ENCODE measurements at regions of chr20 and their contacts with region 1.

Region 1: GRCh38 chr20:324177-325044 is 941 bp upstream of the SOX12 start:
- DNase-seq: peak; percentile 88
- H3K4me3 Mint-ChIP-seq: peak overlapping the region; percentile 86
- H3K27ac Mint-ChIP-seq: peak overlapping the region; percentile 84
- H3K4me1 Mint-ChIP-seq: peaks cover 14% of the 10 kb centered on the region
- H3K27me3 Mint-ChIP-seq: no peaks in the 10 kb centered on the region

Region 2: GRCh38 chr20:242905-243304 is 81.5 kb before region 1 on chr20:
- intact Hi-C with region 1: no loop called
- DNase-seq: no peak
- H3K4me3 Mint-ChIP-seq: no peak overlapping the region
- H3K27ac Mint-ChIP-seq: no peak overlapping the region
- H3K4me1 Mint-ChIP-seq: peaks cover 9% of the 10 kb centered on the region
- H3K27me3 Mint-ChIP-seq: peaks cover 21% of the 10 kb centered on the region

Region 3: DNA sequence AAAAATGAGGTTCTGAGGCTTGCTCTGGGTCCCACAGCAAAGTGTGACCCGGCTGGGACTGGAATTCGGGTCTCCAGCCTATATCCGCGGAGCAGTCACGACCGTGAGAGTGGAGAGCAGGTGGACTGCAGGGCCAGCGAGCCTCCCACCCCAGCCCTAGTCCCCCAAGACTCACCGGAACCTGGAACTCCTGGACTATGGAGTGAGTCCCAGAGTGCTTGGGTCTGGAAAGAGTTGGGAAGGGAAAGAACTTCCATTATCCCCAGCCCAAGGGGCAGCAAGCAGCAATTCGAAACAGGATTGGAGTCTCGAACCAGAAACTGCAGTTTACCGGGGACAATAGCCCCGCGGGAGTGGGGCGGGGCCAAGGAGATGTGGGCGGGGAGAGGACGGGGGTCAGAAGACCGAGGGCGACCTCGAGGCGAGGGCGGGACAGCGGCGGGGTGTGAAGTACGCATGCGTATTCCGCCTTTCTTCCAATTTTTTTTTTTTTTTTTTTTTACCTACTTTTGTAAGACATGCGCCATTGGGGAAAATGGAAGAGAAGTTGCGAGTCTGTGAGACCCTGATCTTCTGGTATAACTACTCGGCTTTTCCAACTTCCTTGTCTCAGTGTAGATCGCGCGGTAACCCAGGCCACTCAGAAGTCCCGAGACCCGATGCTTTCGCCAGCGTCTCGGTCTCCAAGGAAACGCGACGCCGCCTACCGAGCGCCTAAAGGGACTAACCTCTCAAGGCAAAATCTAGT is 34.2 kb before region 1 on chr20 and contains the start of gene C20orf96:
- intact Hi-C with region 1: loop called (anchors 1 kb)
- DNase-seq: peak; percentile 84
- H3K4me3 Mint-ChIP-seq: no peak within 1 kb of the TSS
- H3K27ac Mint-ChIP-seq: peak within 1 kb of the TSS; percentile 87
- H3K4me1 Mint-ChIP-seq: peaks cover 21% of the 10 kb centered on the region
- H3K27me3 Mint-ChIP-seq: no peaks in the 10 kb centered on the region
- total RNA-seq, gene C20orf96: 7.6 and 9.5 TPM in 2 replicates

Region 4: DNA sequence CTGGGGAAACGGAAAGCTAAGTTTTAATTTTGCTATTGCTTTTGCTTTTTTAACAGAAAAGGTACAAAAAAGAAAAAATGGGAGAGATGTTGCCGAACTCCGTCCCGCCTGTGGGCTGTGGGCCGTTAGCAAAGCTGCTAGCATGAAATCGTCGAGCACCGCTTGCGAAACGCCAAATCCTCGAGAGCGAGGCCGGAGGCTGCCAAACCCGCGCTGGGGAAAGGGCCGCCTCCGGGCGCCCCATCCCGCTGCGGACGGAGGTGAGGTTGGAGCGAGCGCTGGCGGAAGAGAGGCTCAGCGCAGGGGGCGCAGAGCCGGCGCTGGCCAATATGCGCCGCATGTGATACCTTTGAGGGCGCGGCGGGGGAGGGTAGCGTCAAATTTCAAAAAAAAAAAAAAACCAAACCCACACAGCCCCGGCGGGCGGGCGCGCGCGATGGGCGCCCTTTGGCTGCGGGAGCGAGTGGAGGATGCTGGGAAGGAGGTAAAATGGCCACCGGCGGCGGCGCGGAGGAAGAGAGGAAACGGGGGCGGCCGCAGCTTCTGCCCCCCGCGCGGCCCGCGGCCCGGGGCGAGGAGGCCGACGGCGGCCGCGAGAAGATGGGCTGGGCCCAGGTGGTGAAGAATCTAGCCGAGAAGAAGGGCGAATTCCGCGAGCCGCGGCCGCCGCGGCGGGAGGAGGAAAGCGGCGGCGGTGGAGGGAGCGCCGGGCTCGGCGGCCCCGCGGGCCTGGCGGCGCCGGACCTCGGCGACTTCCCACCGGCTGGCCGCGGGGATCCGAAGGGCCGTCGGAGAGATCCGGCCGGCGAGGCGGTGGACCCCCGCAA is 27.1 kb before region 1 on chr20 and contains the start of gene ZCCHC3:
- intact Hi-C with region 1: loop called (anchors 1 kb)
- DNase-seq: peak; percentile 85
- H3K4me3 Mint-ChIP-seq: peak within 1 kb of the TSS; percentile 99
- H3K27ac Mint-ChIP-seq: peak within 1 kb of the TSS; percentile 99
- H3K4me1 Mint-ChIP-seq: peaks cover 38% of the 10 kb centered on the region
- H3K27me3 Mint-ChIP-seq: no peaks in the 10 kb centered on the region
- total RNA-seq, gene ZCCHC3: 26.9 and 27.6 TPM in 2 replicates

Region 5: DNA sequence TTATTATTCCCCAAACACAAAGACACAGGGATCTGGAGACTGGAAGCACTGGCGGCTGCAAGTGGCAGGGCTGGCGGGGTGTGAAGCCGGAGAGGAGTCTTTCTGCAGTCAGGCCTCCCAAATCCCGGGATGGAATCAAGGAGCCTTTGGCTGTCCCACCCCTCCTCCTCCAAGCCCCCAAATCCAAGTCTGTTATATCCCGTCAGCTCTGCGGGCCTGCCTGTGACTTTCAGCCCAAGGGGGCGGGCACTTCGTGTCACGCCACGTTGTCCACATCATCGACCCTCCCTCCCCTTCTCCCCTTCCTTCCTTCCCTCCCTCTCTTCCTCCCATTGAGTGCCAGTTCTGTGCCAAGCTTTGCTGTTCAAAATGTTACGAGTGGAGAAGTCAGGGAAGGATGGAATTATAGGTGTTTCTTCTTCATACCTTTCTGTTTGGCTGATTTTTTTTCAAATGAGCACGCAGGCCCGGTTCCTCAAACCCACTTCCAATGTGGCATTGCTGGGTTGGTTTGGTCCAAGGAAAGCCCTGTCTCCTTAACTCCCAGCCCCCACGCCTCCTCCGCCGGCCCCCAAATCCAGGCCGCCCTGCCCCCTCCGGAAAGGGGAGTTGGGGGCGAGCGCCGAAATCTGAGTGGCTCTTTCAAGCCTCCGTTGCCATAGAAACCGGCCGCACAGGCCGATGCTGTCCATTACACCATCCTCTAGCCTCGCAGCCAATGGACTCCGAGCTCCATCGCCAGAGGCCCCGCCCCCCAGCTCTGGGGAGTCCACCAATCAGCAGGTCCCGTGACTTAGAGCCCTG is 14.4 kb before region 1 on chr20:
- intact Hi-C with region 1: loop called (anchors 1 kb)
- DNase-seq: peak; percentile 83
- H3K4me3 Mint-ChIP-seq: peak overlapping the region; percentile 78
- H3K27ac Mint-ChIP-seq: peak overlapping the region; percentile 86
- H3K4me1 Mint-ChIP-seq: peaks cover 17% of the 10 kb centered on the region
- H3K27me3 Mint-ChIP-seq: no peaks in the 10 kb centered on the region

Region 6: GRCh38 chr20:347640-348484 is 23.5 kb after region 1 on chr20:
- intact Hi-C with region 1: loop called (anchors 2 kb)
- DNase-seq: peak; percentile 55
- H3K4me3 Mint-ChIP-seq: peak overlapping the region; percentile 92
- H3K27ac Mint-ChIP-seq: peak overlapping the region; percentile 74
- H3K4me1 Mint-ChIP-seq: peaks cover 16% of the 10 kb centered on the region
- H3K27me3 Mint-ChIP-seq: peaks cover 7% of the 10 kb centered on the region

Measured in activated T-helper 2 cell treated with anti-CD3 and anti-CD28 coated beads, Interferon-gamma antibody, Interleukin-2, Interleukin-4, amounts not matched to agents 10 μg/mL and 5 μg/mL and 100 μg/mL, durations not matched to agents 14 hours and 24 hours and 36 hours (primary cell).